CD4-positive, alpha-beta memory T cell (primary cell): ENCODE measurements at regions of chr17 and their contacts with region 1.

Region 1: GRCh38 chr17:72725433-72726068 is 366.9 kb downstream of the SLC39A11 start:
- DNase-seq: peak in 4 of 5 donors; percentile 23 to 42 (median 28)
- H3K4me3 ChIP-seq: no peak overlapping the region
- H3K4me3 Mint-ChIP-seq: peak overlapping the region in 6 of 8 donors; percentile 25 to 87 (median 56)
- H3K27ac ChIP-seq: no peak overlapping the region
- H3K27ac Mint-ChIP-seq: peak overlapping the region; percentile 6 to 94 (median 31)
- H3K4me1 ChIP-seq: peaks cover 31% of the 10 kb centered on the region
- H3K4me1 Mint-ChIP-seq: peaks cover 25 to 38% (median 31%) of the 10 kb centered on the region in 4 donors
- H3K27me3 ChIP-seq: no peaks in the 10 kb centered on the region
- H3K27me3 Mint-ChIP-seq: no peaks in the 10 kb centered on the region

Region 2: GRCh38 chr17:72609501-72609900 is 116.0 kb before region 1 on chr17:
- CTCF ChIA-PET with region 1: no interaction called
- POLR2A ChIA-PET with region 1: no interaction called
- intact Hi-C with region 1: no loop called
- DNase-seq: no peak
- H3K4me3 ChIP-seq: no peak overlapping the region
- H3K4me3 Mint-ChIP-seq: no peak overlapping the region
- H3K27ac ChIP-seq: no peak overlapping the region
- H3K27ac Mint-ChIP-seq: no peak overlapping the region
- H3K4me1 ChIP-seq: no peaks in the 10 kb centered on the region
- H3K4me1 Mint-ChIP-seq: no peaks in the 10 kb centered on the region
- H3K27me3 ChIP-seq: no peaks in the 10 kb centered on the region
- H3K27me3 Mint-ChIP-seq: peaks cover 1 to 9% of the 10 kb centered on the region in 2 donors

Region 3: GRCh38 chr17:72710185-72710584 is 15.4 kb before region 1 on chr17:
- CTCF ChIA-PET with region 1: interaction called, 106 read pairs
- POLR2A ChIA-PET with region 1: interaction called, 3 read pairs
- intact Hi-C with region 1: no loop called
- DNase-seq: no peak
- H3K4me3 ChIP-seq: no peak overlapping the region
- H3K4me3 Mint-ChIP-seq: peak overlapping the region in 4 of 8 donors; percentile 0 to 54 (median 38)
- H3K27ac ChIP-seq: no peak overlapping the region
- H3K27ac Mint-ChIP-seq: peak overlapping the region in 4 of 7 donors; percentile 6 to 76 (median 7)
- H3K4me1 ChIP-seq: peaks cover 7% of the 10 kb centered on the region
- H3K4me1 Mint-ChIP-seq: peaks cover 12 to 27% (median 20%) of the 10 kb centered on the region in 4 donors
- H3K27me3 ChIP-seq: no peaks in the 10 kb centered on the region
- H3K27me3 Mint-ChIP-seq: no peaks in the 10 kb centered on the region

Region 4: DNA sequence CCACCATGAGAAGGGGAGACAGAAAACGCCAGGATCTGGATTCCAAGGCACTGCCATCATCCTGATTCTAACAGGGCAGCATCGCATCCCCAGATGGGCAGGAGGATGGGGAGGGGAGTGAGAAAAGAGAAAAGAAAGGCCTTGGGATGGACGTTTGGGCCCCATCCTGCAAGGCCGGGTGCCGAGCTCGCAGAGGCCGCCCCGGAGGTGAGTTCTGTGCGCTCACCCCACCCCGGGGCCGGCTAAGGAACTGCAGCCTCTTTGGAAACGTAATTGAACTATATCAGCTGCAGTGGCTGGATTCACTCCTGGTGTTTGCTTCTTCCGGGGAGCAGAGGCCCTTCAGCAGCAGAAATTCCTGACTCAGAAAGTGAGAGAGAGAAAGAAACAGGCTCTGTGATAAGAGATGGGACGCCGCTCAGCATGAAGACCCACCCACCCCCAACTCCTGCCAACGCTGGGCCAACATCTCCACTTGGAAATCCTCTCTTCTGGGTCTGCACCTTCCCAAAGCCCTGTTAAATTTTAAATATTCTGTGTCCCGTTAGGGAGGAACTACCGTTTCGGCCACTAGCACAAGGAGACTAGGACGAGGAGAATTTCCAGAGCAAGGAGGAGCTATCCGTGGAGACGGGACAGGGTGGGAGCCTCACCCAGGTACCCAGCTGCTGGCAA is 430.8 kb after region 1 on chr17:
- CTCF ChIA-PET with region 1: interaction called, 125 read pairs
- POLR2A ChIA-PET with region 1: interaction called, 16 read pairs
- intact Hi-C with region 1: no loop called
- DNase-seq: peak in 4 of 5 donors; percentile 36 to 45 (median 37)
- H3K4me3 ChIP-seq: peak overlapping the region in 1 of 2 donors; percentile 5
- H3K4me3 Mint-ChIP-seq: no peak overlapping the region
- H3K27ac ChIP-seq: no peak overlapping the region
- H3K27ac Mint-ChIP-seq: no peak overlapping the region
- H3K4me1 ChIP-seq: peaks cover 5% of the 10 kb centered on the region
- H3K4me1 Mint-ChIP-seq: peaks cover 4 to 13% (median 10%) of the 10 kb centered on the region in 4 donors
- H3K27me3 ChIP-seq: peaks cover 7% of the 10 kb centered on the region
- H3K27me3 Mint-ChIP-seq: peaks cover 7 to 31% of the 10 kb centered on the region in 2 donors

Region 5: GRCh38 chr17:73231841-73232586 is 506.5 kb after region 1 on chr17:
- CTCF ChIA-PET with region 1: interaction called, 19 read pairs
- POLR2A ChIA-PET with region 1: interaction called, 10 read pairs
- intact Hi-C with region 1: no loop called
- DNase-seq: peak; percentile 95 to 97 (median 96)
- H3K4me3 ChIP-seq: peak overlapping the region; percentile 63 to 77
- H3K4me3 Mint-ChIP-seq: peak overlapping the region; percentile 91 to 96 (median 94)
- H3K27ac ChIP-seq: peak overlapping the region; percentile 73
- H3K27ac Mint-ChIP-seq: peak overlapping the region; percentile 91 to 99 (median 97)
- H3K4me1 ChIP-seq: peaks cover 58% of the 10 kb centered on the region
- H3K4me1 Mint-ChIP-seq: peaks cover 44 to 81% (median 62%) of the 10 kb centered on the region in 4 donors
- H3K27me3 ChIP-seq: no peaks in the 10 kb centered on the region
- H3K27me3 Mint-ChIP-seq: no peaks in the 10 kb centered on the region

Region 6: DNA sequence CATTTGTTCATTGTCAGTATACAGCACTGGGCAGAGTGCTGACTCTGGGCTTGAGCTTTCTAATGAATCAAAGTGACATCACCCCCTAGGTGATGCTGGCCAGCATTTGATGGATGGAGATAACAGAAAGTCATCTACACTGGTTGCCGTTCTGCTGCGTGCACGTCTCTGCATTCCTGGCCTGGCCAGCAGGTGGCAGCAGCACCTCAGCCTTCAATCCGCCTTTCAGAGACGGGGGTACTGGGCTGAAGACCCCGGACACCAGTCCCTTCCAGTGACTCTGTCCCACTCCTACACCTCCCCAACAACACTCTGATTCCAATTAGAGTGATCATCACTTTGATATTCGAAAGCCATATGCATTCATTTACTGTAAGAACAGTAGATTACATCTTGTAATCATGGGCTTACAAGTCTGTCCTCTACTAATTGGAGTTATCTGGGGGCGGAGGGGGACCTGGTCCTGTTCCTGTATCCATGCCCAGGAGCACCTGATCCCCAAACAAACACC is 530.2 kb after region 1 on chr17:
- CTCF ChIA-PET with region 1: interaction called, 49 read pairs
- POLR2A ChIA-PET with region 1: no interaction called
- intact Hi-C with region 1: loop called (anchors 1 kb)
- DNase-seq: peak in 4 of 5 donors; percentile 32 to 49 (median 40)
- H3K4me3 ChIP-seq: no peak overlapping the region
- H3K4me3 Mint-ChIP-seq: no peak overlapping the region
- H3K27ac ChIP-seq: no peak overlapping the region
- H3K27ac Mint-ChIP-seq: peak overlapping the region in 2 of 7 donors; percentile 36 to 58
- H3K4me1 ChIP-seq: no peaks in the 10 kb centered on the region
- H3K4me1 Mint-ChIP-seq: peaks cover 0 to 5% (median 2%) of the 10 kb centered on the region in 4 donors
- H3K27me3 ChIP-seq: no peaks in the 10 kb centered on the region
- H3K27me3 Mint-ChIP-seq: peaks cover 0 to 2% of the 10 kb centered on the region in 2 donors